ENCODE measurements at regions of chr1 and their contacts with region 1.

Region 1: DNA sequence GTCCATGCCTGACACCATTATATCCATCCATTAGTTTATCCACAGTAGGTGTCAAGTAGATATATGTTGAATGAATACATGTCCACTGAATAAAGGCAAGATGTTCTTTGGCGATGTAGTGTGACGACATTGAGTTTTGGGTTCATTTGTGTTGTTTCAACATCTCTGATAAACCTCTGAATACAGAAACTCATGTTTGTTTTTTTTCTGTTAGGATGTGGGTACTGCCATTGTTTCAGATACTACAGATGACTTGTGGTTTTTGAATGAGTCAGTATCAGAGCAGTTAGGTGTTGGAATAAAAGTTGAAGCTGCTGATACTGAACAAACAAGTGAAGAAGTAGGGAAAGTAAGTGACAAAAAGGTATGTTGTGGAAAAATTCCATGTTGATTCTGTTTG is 28.1 kb downstream of the MDM4 start:
- DNase-seq: no peak
- ATAC-seq: peak; percentile 87
- H3K4me3 Mint-ChIP-seq: peak overlapping the region; percentile 23
- H3K27ac Mint-ChIP-seq: peak overlapping the region; percentile 83
- H3K4me1 Mint-ChIP-seq: peaks cover 55% of the 10 kb centered on the region
- H3K27me3 Mint-ChIP-seq: no peaks in the 10 kb centered on the region

Region 2: DNA sequence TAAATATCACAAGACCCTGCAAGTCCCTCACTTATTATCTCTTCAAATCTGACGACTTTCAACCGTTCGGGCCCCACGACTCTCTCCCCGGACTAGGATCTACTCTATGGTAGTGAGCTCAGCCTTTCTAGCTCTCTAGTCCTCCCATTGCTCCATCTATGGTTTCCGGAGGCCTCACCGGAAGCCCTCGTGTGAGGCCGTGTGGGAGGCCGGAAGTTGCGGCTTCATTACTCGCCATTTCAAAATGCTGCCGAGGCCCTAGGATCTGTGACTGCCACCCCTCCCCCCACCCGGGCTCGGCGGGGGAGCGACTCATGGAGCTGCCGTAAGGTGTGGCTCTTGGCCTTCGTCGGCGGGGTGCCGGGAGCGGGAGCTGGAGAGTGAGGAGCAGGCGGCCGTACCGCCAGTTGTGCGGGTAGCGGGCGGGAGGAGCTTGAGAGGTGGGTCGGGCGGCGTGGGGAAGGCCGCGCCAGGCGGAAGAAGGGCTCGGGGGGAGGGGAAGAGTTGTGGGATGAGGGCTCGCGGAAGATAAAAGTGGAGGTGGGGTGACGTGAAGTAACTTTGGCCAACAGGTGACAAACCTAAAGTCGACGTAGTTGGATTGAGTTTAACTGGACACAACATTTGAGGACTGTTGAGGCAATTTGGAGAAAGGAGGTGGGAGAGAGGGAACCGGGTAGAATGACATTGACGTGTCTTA is 28.0 kb before region 1 on chr1 and contains the start of gene MDM4:
- CTCF ChIA-PET with region 1: interaction called, 11 read pairs
- POLR2A ChIA-PET with region 1: interaction called, 65 read pairs
- DNase-seq: peak; percentile 97
- ATAC-seq: peak; percentile 83
- H3K4me3 Mint-ChIP-seq: no peak within 1 kb of the TSS
- H3K27ac Mint-ChIP-seq: no peak within 1 kb of the TSS
- H3K4me1 Mint-ChIP-seq: peaks cover 65% of the 10 kb centered on the region
- H3K27me3 Mint-ChIP-seq: no peaks in the 10 kb centered on the region
- total RNA-seq, gene MDM4: 72.2 to 72.4 TPM

Region 3: GRCh38 chr1:204523605-204524215 is 20.6 kb before region 1 on chr1:
- CTCF ChIA-PET with region 1: interaction called, 16 read pairs
- POLR2A ChIA-PET with region 1: interaction called, 10 read pairs
- DNase-seq: no peak
- ATAC-seq: no peak
- H3K4me3 Mint-ChIP-seq: no peak overlapping the region
- H3K27ac Mint-ChIP-seq: peak overlapping the region; percentile 9
- H3K4me1 Mint-ChIP-seq: peaks cover 45% of the 10 kb centered on the region
- H3K27me3 Mint-ChIP-seq: no peaks in the 10 kb centered on the region

Region 4: DNA sequence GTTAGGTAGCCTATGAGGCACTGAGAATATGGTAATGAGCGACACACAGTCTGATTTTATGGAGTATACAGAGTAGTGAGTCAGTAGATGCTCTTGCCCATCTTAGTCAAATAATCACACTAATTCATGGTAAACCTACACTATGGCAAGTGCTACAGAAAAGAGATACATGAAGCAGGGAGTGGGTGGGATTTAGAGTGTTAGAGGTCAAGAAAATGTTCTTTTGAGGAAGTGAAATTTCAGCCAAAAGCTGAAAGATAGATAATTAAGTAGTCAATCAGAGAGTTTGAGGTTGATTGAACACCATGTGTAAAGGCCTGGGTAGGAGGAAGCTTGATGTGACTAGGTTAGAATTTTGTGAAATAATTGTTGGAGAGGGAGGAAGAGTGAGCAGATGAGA is 13.4 kb before region 1 on chr1:
- CTCF ChIA-PET with region 1: interaction called, 16 read pairs
- POLR2A ChIA-PET with region 1: no interaction called
- DNase-seq: no peak
- ATAC-seq: no peak
- H3K4me3 Mint-ChIP-seq: no peak overlapping the region
- H3K27ac Mint-ChIP-seq: no peak overlapping the region
- H3K4me1 Mint-ChIP-seq: peaks cover 1% of the 10 kb centered on the region
- H3K27me3 Mint-ChIP-seq: no peaks in the 10 kb centered on the region

Region 5: GRCh38 chr1:204560590-204561150 is 16.3 kb after region 1 on chr1:
- CTCF ChIA-PET with region 1: interaction called, 36 read pairs
- POLR2A ChIA-PET with region 1: interaction called, 7 read pairs
- DNase-seq: no peak
- ATAC-seq: no peak
- H3K4me3 Mint-ChIP-seq: no peak overlapping the region
- H3K27ac Mint-ChIP-seq: no peak overlapping the region
- H3K4me1 Mint-ChIP-seq: peaks cover 49% of the 10 kb centered on the region
- H3K27me3 Mint-ChIP-seq: no peaks in the 10 kb centered on the region

Measured in activated CD8-positive, alpha-beta T cell treated with anti-CD3 and anti-CD28 coated beads, Interleukin-2, amount 10 ng/mL, durations not matched to agents 7 days and 5 days (primary cell).